ENCODE measurements at regions of chr11 and their contacts with region 1.

Region 1: GRCh38 chr11:125494974-125495725 is 915 bp downstream of the FEZ1 start:
- DNase-seq: peak; percentile 22 to 43
- ATAC-seq: peak; percentile 11 to 28 (median 25)
- H3K4me3 ChIP-seq: peak overlapping the region; percentile 80
- H3K4me3 Mint-ChIP-seq: peak overlapping the region; percentile 96
- H3K27ac ChIP-seq: no peak overlapping the region
- H3K27ac Mint-ChIP-seq: peak overlapping the region; percentile 90
- H3K4me1 ChIP-seq: peaks cover 24% of the 10 kb centered on the region
- H3K4me1 Mint-ChIP-seq: peaks cover 30 to 40% of the 10 kb centered on the region in 2 donors
- H3K27me3 ChIP-seq: peaks cover 9% of the 10 kb centered on the region
- H3K27me3 Mint-ChIP-seq: peaks cover 0 to 10% of the 10 kb centered on the region in 2 donors
- CTCF ChIP-seq: no peak

Region 2: DNA sequence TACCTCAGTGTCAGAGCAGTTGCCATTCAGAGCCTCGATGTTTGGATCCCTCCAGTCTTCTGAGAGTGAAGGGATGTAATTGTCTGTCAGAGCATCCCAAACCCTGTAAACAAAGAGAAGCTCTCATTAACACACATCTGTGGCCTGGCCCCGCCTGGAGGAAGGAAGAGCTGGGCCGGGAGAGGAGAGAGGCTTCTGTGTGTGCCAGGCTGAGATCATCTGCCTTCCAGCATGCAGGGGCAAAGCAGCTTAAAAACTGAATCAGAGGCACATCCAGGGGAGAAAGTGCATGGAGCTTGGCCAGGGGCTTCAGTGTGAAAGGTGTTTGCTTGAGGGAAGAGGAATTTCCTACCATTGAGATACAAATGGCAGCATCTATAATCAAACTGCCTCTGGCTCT is 13.6 kb before region 1 on chr11:
- intact Hi-C with region 1: loop called (anchors 1 kb)
- DNase-seq: no peak
- ATAC-seq: no peak
- H3K4me3 ChIP-seq: no peak overlapping the region
- H3K4me3 Mint-ChIP-seq: no peak overlapping the region
- H3K27ac ChIP-seq: no peak overlapping the region
- H3K27ac Mint-ChIP-seq: no peak overlapping the region
- H3K4me1 ChIP-seq: no peaks in the 10 kb centered on the region
- H3K4me1 Mint-ChIP-seq: peaks cover 5 to 8% of the 10 kb centered on the region in 2 donors
- H3K27me3 ChIP-seq: no peaks in the 10 kb centered on the region
- H3K27me3 Mint-ChIP-seq: peaks cover 0 to 3% of the 10 kb centered on the region in 2 donors
- CTCF ChIP-seq: no peak

Region 3: DNA sequence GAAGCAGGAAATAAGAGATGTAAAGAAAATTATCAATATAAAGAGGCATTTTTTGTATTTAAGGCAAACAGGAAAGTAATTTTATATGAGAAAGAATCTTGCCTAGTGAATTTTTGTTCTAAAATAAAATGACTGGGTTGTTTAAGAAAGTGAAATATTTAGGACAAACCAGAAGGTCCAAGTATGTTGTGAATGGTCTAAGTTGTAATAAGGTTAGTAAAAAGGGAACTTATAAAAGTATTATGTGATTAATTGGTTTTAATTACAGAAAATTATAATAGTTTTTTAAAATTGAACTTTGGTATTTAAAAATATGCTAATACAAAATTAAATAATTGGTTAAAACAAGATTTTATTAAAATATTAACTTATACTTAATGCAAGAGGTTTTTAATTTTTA is 47.6 kb after region 1 on chr11:
- intact Hi-C with region 1: no loop called
- DNase-seq: no peak
- ATAC-seq: no peak
- H3K4me3 ChIP-seq: no peak overlapping the region
- H3K4me3 Mint-ChIP-seq: no peak overlapping the region
- H3K27ac ChIP-seq: no peak overlapping the region
- H3K27ac Mint-ChIP-seq: no peak overlapping the region
- H3K4me1 ChIP-seq: no peaks in the 10 kb centered on the region
- H3K4me1 Mint-ChIP-seq: no peaks in the 10 kb centered on the region
- H3K27me3 ChIP-seq: no peaks in the 10 kb centered on the region
- H3K27me3 Mint-ChIP-seq: no peaks in the 10 kb centered on the region
- CTCF ChIP-seq: no peak

Region 4: DNA sequence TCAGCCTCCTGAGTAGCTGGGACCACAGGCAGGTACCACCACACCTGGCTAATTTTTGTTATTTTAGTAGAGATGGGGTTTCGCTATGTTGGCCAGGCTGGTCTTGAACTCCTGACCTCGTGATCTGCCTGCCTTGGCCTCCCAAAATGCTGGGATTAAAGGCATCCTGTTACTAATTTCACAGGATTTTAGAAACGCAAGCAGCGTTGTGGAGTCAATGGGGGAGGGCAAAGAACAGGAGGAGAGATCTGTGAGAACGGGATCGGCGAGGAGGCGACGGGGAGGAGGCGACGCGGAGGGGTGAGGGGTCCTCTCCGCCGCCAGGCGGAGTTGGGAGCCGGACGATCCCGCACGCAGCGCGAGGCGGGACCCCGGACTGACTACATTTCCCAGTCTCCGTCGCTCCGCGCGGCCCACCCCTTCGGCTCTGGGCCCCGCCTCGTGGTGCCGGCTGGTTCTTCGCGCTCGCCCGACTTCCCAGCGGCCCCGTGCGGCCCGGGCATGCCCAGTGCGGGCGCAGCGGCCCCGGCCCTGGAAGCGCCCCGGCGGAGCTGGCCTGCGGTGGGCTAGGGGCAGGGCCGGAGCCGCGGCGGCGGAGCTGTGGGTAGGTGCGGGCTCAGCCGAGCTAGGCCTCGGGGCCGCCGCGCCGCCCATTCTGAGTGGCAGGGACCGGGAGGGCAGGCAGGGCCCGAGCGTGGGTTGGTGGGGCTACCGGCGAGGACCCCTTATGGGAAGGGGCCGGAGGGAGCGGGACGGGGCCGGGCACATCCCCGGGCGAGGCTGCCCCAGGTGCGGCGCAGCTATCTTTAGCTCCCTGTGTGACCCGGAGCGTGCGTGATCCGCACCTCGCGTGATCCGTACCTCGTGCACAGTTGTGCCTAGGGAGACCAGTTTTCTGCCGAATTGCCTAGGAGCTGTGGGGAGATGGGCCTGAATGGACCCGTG is 74.1 kb after region 1 on chr11 and contains the start of gene EI24:
- intact Hi-C with region 1: loop called (anchors 5 kb)
- DNase-seq: peak; percentile 77 to 94
- ATAC-seq: peak; percentile 94 to 98 (median 95)
- H3K4me3 ChIP-seq: peak within 1 kb of the TSS; percentile 82
- H3K4me3 Mint-ChIP-seq: peak within 1 kb of the TSS; percentile 89
- H3K27ac ChIP-seq: peak within 1 kb of the TSS; percentile 76
- H3K27ac Mint-ChIP-seq: peak within 1 kb of the TSS; percentile 87 to 95
- H3K4me1 ChIP-seq: peaks cover 19% of the 10 kb centered on the region
- H3K4me1 Mint-ChIP-seq: peaks cover 18 to 21% of the 10 kb centered on the region in 2 donors
- H3K27me3 ChIP-seq: no peaks in the 10 kb centered on the region
- H3K27me3 Mint-ChIP-seq: no peaks in the 10 kb centered on the region
- CTCF ChIP-seq: peak; percentile 55
- total RNA-seq, gene EI24: 19.5 to 30.0 (median 20.2) TPM

Measured in natural killer cell (primary cell).